B cell (primary cell): ENCODE measurements at regions of chr11 and their contacts with region 1.

Region 1: DNA sequence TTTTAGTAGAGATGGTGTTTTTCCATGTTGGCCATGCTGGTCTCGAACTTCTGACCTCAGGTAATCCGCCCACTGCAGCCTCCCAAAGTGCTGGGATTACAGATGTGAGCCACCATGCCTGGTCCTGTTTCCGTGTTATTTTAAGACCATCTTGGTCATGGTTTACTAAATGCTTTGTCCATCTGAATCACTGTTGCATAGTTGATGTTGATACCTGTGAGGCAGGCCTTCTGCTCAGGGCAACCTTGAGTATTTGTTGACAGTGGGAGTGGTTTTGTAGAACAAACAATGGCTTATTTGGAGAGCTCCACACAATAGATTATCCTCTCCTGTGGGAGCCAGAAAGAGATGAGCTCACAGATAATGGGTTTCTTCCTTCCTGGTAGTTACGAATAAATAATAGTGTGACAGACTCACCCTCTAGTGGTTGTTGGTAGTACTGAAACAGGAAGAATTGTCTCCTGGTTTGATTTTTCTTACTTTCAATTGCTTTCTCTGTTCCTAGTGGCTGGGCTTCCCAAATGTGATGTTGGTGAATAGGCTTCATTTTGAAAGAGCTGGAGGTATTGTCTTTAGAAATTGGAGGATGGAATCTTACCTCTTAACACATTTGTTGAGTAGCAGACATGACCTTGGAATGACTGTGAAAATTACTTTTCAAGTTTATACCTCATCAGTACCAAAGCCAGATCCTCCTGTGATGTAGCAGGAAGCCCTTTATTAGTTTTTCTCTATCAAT is 39.0 kb downstream of the CTNND1 start:
- DNase-seq: peak; percentile 81
- ATAC-seq: peak; percentile 90
- H3K4me3 ChIP-seq: no peak overlapping the region
- H3K4me3 Mint-ChIP-seq: peak overlapping the region; percentile 38
- H3K27ac ChIP-seq: peak overlapping the region; percentile 39 to 90
- H3K27ac Mint-ChIP-seq: peak overlapping the region; percentile 91
- H3K4me1 ChIP-seq: peaks cover 28 to 30% of the 10 kb centered on the region in 2 donors
- H3K4me1 Mint-ChIP-seq: peaks cover 36% of the 10 kb centered on the region
- H3K27me3 ChIP-seq: no peaks in the 10 kb centered on the region
- H3K27me3 Mint-ChIP-seq: no peaks in the 10 kb centered on the region
- CTCF ChIP-seq: peak; percentile 92

Region 2: DNA sequence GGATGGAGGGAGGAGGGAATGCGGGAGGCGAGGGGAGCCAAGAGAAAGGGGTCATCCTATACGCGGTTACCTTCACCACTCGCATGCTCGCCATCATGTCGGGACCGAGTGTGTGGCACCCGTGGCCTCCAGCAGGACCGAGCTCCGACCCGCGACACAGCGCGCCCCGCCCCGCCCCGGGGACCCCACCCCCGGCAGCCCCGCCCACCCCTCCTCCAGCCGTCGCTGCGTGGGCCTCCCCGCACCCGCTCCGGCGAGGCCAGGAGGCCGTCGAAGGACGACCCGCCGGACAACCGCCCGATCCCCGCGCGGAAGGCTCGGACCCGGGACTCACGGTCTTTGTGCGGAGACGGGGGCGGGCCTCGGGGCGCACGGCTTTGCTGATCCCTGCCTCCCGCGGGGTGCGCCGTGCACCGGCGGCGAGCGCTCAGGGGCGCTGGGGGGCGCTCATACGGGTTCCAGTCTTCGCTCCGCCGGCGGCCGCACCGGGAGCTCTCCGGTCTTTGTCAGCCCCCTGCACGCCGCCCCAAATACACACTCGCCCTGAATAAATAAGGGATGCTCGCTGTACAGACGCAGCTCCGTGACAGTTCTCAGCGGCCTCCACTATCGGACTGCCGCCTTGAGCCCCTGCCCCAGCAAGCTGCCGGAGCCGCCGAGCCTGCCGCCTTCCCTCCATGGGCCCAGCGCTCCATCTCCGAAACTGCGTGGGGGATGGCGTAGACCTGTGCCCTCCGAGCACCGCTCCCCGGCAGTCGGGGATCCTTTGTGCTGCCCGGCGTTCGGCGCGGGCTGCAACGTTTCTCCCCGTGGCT is 232.9 kb before region 1 on chr11 and contains the start of gene UBE2L6:
- CTCF ChIA-PET with region 1: interaction called, 33 read pairs
- POLR2A ChIA-PET with region 1: interaction called, 3 read pairs
- intact Hi-C with region 1: loop called (anchors 1 kb)
- DNase-seq: peak; percentile 82
- ATAC-seq: peak; percentile 69
- H3K4me3 ChIP-seq: peak within 1 kb of the TSS; percentile 83 to 99 (median 98)
- H3K4me3 Mint-ChIP-seq: peak within 1 kb of the TSS; percentile 99
- H3K27ac ChIP-seq: peak within 1 kb of the TSS; percentile 83 to 92
- H3K27ac Mint-ChIP-seq: peak within 1 kb of the TSS; percentile 99
- H3K4me1 ChIP-seq: peaks cover 18 to 26% of the 10 kb centered on the region in 2 donors
- H3K4me1 Mint-ChIP-seq: peaks cover 36% of the 10 kb centered on the region
- H3K27me3 ChIP-seq: no peaks in the 10 kb centered on the region
- H3K27me3 Mint-ChIP-seq: no peaks in the 10 kb centered on the region
- CTCF ChIP-seq: peak; percentile 95
- total RNA-seq, gene UBE2L6: 66.3 and 70.7 TPM in 2 replicates

Region 3: GRCh38 chr11:57667736-57668435 is 132.7 kb before region 1 on chr11 and contains the start of gene ZDHHC5:
- CTCF ChIA-PET with region 1: interaction called, 19 read pairs
- POLR2A ChIA-PET with region 1: no interaction called
- intact Hi-C with region 1: loop called (anchors 1 kb)
- DNase-seq: peak; percentile 100
- ATAC-seq: peak; percentile 78
- H3K4me3 ChIP-seq: peak within 1 kb of the TSS; percentile 72 to 96 (median 83)
- H3K4me3 Mint-ChIP-seq: peak within 1 kb of the TSS; percentile 95
- H3K27ac ChIP-seq: peak within 1 kb of the TSS; percentile 98 to 99
- H3K27ac Mint-ChIP-seq: peak within 1 kb of the TSS; percentile 100
- H3K4me1 ChIP-seq: peaks cover 25% of the 10 kb centered on the region in 2 donors
- H3K4me1 Mint-ChIP-seq: peaks cover 50% of the 10 kb centered on the region
- H3K27me3 ChIP-seq: no peaks in the 10 kb centered on the region
- H3K27me3 Mint-ChIP-seq: no peaks in the 10 kb centered on the region
- CTCF ChIP-seq: peak; percentile 55
- total RNA-seq, gene ZDHHC5: 53.8 and 56.2 TPM in 2 replicates

Region 4: GRCh38 chr11:57741132-57742086 is 59.2 kb before region 1 on chr11 and contains the start of gene SELENOH:
- CTCF ChIA-PET with region 1: interaction called, 180 read pairs
- POLR2A ChIA-PET with region 1: interaction called, 24 read pairs
- intact Hi-C with region 1: loop called (anchors 1 kb)
- DNase-seq: peak; percentile 93
- ATAC-seq: peak; percentile 83
- H3K4me3 ChIP-seq: peak within 1 kb of the TSS; percentile 83 to 97 (median 94)
- H3K4me3 Mint-ChIP-seq: peak within 1 kb of the TSS; percentile 99
- H3K27ac ChIP-seq: peak within 1 kb of the TSS; percentile 90 to 97
- H3K27ac Mint-ChIP-seq: peak within 1 kb of the TSS; percentile 99
- H3K4me1 ChIP-seq: peaks cover 11 to 32% of the 10 kb centered on the region in 2 donors
- H3K4me1 Mint-ChIP-seq: peaks cover 38% of the 10 kb centered on the region
- H3K27me3 ChIP-seq: no peaks in the 10 kb centered on the region
- H3K27me3 Mint-ChIP-seq: no peaks in the 10 kb centered on the region
- CTCF ChIP-seq: no peak
- total RNA-seq, gene SELENOH: 147 and 153 TPM in 2 replicates

Region 5: GRCh38 chr11:57778318-57779037 is 22.1 kb before region 1 on chr11:
- CTCF ChIA-PET with region 1: interaction called, 37 read pairs
- POLR2A ChIA-PET with region 1: interaction called, 8 read pairs
- intact Hi-C with region 1: no loop called
- DNase-seq: no peak
- ATAC-seq: no peak
- H3K4me3 ChIP-seq: no peak overlapping the region
- H3K4me3 Mint-ChIP-seq: no peak overlapping the region
- H3K27ac ChIP-seq: no peak overlapping the region
- H3K27ac Mint-ChIP-seq: no peak overlapping the region
- H3K4me1 ChIP-seq: peaks cover 14 to 22% of the 10 kb centered on the region in 2 donors
- H3K4me1 Mint-ChIP-seq: peaks cover 45% of the 10 kb centered on the region
- H3K27me3 ChIP-seq: no peaks in the 10 kb centered on the region
- H3K27me3 Mint-ChIP-seq: no peaks in the 10 kb centered on the region
- CTCF ChIP-seq: no peak